ENCODE measurements at regions of chr6 and their contacts with region 1.

Region 1: DNA sequence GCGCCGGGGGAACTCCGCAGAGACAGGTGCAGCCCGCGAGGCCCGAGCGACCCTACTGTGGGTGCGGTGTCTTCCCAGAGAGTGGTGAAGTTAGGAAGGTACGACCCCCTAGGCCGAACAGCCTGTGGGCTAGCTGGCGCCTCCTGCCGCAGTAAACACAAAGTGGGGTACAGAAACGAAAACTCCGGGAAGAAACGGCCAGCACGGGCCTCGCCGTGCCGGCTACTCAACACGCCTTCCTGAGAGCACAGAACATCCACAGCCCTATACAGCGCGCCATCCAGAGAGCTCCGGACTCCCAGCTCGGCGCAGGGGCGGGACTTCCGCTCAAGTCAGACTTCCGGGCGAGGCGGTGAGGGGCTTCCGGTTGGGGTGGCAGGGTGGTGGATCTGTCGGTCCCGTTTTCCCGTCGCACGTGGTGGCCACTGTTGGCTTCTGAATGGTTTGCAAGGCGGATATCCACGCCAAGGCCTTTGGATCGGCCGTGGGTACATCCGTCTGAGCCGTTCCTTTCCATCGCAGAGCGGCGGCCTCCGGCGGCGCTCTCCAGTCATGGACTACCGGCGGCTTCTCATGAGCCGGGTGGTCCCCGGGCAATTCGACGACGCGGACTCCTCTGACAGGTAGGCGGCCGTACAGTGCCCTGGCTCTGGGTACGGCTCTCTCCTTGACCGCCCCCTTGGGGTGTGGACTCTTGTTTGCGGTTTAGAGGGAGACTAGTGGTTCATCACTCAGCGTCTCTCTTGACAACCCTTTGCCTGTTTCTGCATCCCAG is at the starts of genes CAGE1 and RIOK1:
- DNase-seq: peak; percentile 89 to 93 (median 91)
- H3K4me3 ChIP-seq: peak within 1 kb of the TSS; percentile 76 to 99 (median 88)
- H3K4me3 Mint-ChIP-seq: peak within 1 kb of the TSS; percentile 96 to 99
- H3K27ac ChIP-seq: peak within 1 kb of the TSS; percentile 99
- H3K27ac Mint-ChIP-seq: peak within 1 kb of the TSS; percentile 96 to 99 (median 97)
- H3K4me1 ChIP-seq: peaks cover 26 to 29% of the 10 kb centered on the region in 2 donors
- H3K4me1 Mint-ChIP-seq: peaks cover 33% of the 10 kb centered on the region
- H3K27me3 ChIP-seq: no peaks in the 10 kb centered on the region
- H3K27me3 Mint-ChIP-seq: no peaks in the 10 kb centered on the region
- CTCF ChIP-seq: peak; percentile 19
- polyA plus RNA-seq, gene CAGE1: not detected
- polyA plus RNA-seq, gene RIOK1: 7.7 to 14.6 (median 8.8) TPM

Region 2: DNA sequence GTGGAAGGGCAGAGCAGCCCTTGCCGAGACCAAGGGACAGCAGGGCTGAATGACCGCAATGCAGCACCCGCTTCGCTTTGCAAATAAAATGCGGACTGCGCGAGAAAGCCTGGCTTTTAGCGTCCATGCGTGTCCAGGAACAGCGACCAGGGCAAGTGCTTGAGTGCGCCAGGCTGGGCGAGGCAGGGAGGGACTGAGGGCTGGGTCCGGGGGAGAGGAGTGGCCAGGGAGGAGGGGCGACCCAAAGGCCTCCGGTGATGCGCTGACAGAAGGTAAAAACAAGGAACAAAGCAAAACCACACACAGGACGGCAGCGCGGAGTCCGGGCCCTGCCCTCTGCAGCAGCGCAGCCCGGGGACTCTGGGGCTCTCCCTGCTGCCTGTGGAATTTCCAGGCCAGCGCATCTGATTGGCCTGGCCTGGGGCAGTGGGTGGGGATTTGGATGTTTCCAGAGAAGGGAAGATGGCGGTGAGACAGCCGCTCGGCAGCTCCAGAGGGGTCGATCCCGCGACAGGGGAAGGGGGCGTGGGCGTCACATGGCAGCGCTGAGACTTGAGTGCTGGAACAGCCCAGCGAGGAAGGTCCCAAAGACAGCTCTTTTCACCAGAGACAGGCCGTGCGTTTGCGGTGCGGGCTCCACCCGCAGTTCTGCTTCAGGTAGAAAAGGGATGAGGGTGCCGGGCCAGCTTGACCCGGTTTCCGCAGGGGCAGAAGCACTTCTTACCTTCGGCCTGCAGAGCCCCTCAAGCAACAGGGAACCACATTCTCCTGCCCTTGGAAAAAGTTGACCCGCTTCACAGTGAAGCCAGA is 128.4 kb before region 1 on chr6:
- intact Hi-C with region 1: loop called in 1 of 2 experiments (anchors 10 kb)
- DNase-seq: peak; percentile 84 to 95 (median 92)
- H3K4me3 ChIP-seq: peak overlapping the region; percentile 47 to 86 (median 65)
- H3K4me3 Mint-ChIP-seq: peak overlapping the region; percentile 89 to 98
- H3K27ac ChIP-seq: peak overlapping the region; percentile 84 to 90
- H3K27ac Mint-ChIP-seq: peak overlapping the region; percentile 95 to 99 (median 97)
- H3K4me1 ChIP-seq: peaks cover 76 to 92% of the 10 kb centered on the region in 2 donors
- H3K4me1 Mint-ChIP-seq: peaks cover 88% of the 10 kb centered on the region
- H3K27me3 ChIP-seq: no peaks in the 10 kb centered on the region
- H3K27me3 Mint-ChIP-seq: peaks cover 0 to 9% (median 0%) of the 10 kb centered on the region in 3 donors
- CTCF ChIP-seq: no peak

Region 3: DNA sequence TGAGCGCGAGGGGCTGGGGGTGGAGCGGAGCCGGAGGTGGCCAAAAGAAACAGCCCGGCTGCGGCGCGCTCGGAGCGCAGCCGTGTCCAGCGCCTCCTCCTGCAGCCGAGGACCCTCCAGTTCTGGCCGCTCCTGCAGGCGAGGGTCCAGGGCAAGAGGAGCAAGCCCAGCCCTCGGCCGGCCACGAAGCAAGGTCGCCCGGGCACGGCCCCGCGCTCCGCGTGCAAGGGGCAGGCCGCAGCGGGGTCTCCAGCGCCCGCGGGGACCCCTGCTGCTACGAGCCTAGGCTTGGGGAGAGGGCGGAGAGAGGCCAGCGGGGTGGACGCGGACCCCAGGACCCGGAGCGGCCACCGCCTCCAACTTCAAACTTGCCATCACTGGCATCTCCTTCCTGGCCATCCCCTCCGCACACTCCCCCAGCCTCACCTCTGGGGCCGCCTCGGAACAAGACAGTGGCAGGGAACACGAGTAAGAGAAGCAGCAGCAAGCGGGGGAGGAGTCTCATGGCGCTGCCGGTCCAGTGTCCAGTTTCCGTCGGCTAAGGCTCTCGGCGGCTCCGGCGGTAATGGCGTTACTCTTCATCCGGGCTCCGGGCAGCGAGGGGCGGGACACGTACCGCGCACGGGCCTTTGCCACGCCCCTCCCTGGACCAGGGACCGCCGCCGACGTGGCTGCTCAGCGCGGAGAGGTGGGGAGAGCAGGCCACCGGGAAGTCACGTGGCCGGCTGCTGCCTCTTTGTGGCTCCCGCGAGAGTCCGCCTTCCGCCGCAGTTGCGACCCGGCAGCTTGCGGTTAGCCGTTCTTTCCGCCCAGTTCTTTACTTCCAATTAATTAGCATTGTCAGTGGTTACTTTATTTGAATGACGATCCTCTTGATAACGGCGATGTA is 76.8 kb before region 1 on chr6 and contains the start of gene SSR1:
- intact Hi-C with region 1: loop called in 1 of 2 experiments (anchors 5 kb)
- DNase-seq: peak; percentile 96 to 98 (median 97)
- H3K4me3 ChIP-seq: peak within 1 kb of the TSS; percentile 68 to 94 (median 83)
- H3K4me3 Mint-ChIP-seq: peak within 1 kb of the TSS; percentile 90 to 97
- H3K27ac ChIP-seq: peak within 1 kb of the TSS; percentile 83 to 92
- H3K27ac Mint-ChIP-seq: peak within 1 kb of the TSS; percentile 86 to 96 (median 93)
- H3K4me1 ChIP-seq: peaks cover 34 to 53% of the 10 kb centered on the region in 2 donors
- H3K4me1 Mint-ChIP-seq: peaks cover 53% of the 10 kb centered on the region
- H3K27me3 ChIP-seq: no peaks in the 10 kb centered on the region
- H3K27me3 Mint-ChIP-seq: peaks cover 0 to 1% (median 0%) of the 10 kb centered on the region in 3 donors
- CTCF ChIP-seq: no peak
- polyA plus RNA-seq, gene SSR1: 59.1 to 302 (median 251) TPM

Region 4: GRCh38 chr6:7332090-7332745 is 57.4 kb before region 1 on chr6:
- intact Hi-C with region 1: loop called in 1 of 2 experiments (anchors 10 kb)
- DNase-seq: peak; percentile 47 to 61 (median 58)
- H3K4me3 ChIP-seq: no peak overlapping the region
- H3K4me3 Mint-ChIP-seq: no peak overlapping the region
- H3K27ac ChIP-seq: peak overlapping the region in 1 of 2 donors; percentile 47
- H3K27ac Mint-ChIP-seq: peak overlapping the region; percentile 20 to 79 (median 48)
- H3K4me1 ChIP-seq: peaks cover 29 to 31% of the 10 kb centered on the region in 2 donors
- H3K4me1 Mint-ChIP-seq: peaks cover 27% of the 10 kb centered on the region
- H3K27me3 ChIP-seq: no peaks in the 10 kb centered on the region
- H3K27me3 Mint-ChIP-seq: peaks cover 0 to 2% (median 0%) of the 10 kb centered on the region in 3 donors
- CTCF ChIP-seq: no peak

Measured in CD14-positive monocyte (primary cell).